ENCODE measurements at regions of chrX and their contacts with region 1.

Region 1: GRCh38 chrX:40580537-40581335 is at the start of gene ATP6AP2:
- DNase-seq: peak; percentile 76 to 95 (median 88)
- ATAC-seq: peak; percentile 95
- H3K4me3 ChIP-seq: peak within 1 kb of the TSS; percentile 82 to 93
- H3K4me3 Mint-ChIP-seq: peak within 1 kb of the TSS; percentile 91
- H3K27ac ChIP-seq: peak within 1 kb of the TSS; percentile 89 to 96
- H3K27ac Mint-ChIP-seq: peak within 1 kb of the TSS; percentile 97
- H3K4me1 ChIP-seq: peaks cover 18% of the 10 kb centered on the region
- H3K4me1 Mint-ChIP-seq: peaks cover 30% of the 10 kb centered on the region
- H3K27me3 ChIP-seq: no peaks in the 10 kb centered on the region
- H3K27me3 Mint-ChIP-seq: no peaks in the 10 kb centered on the region
- CTCF ChIP-seq: no peak
- total RNA-seq, gene ATP6AP2: 62.0 to 67.3 TPM

Region 2: GRCh38 chrX:40591126-40591525 is 10.4 kb after region 1 on chrX:
- CTCF ChIA-PET with region 1: no interaction called
- POLR2A ChIA-PET with region 1: interaction called, 6 read pairs
- intact Hi-C with region 1: loop called in 1 of 2 experiments (anchors 1 kb)
- DNase-seq: no peak
- ATAC-seq: no peak
- H3K4me3 ChIP-seq: no peak overlapping the region
- H3K4me3 Mint-ChIP-seq: no peak overlapping the region
- H3K27ac ChIP-seq: no peak overlapping the region
- H3K27ac Mint-ChIP-seq: no peak overlapping the region
- H3K4me1 ChIP-seq: peaks cover 23% of the 10 kb centered on the region
- H3K4me1 Mint-ChIP-seq: peaks cover 28% of the 10 kb centered on the region
- H3K27me3 ChIP-seq: no peaks in the 10 kb centered on the region
- H3K27me3 Mint-ChIP-seq: no peaks in the 10 kb centered on the region
- CTCF ChIP-seq: no peak

Region 3: DNA sequence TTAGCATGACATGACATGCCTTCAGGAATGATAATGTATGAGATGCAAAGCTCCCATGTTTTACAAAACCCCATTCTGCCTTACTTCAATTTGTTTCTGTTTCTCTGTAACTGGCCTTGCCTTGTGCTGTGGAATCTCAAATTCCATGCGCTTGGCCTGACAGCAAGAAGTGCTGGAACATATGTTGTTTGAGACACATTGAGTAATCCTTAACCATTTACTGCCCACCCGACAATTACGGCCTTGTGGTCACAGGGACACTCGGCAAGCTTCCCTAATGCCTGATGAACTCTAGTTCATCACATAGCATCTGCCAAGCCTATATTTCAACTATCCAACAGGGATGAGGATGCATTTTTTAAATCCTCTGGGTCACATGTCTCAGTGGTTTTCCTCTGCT is 1569.0 kb after region 1 on chrX:
- CTCF ChIA-PET with region 1: no interaction called
- POLR2A ChIA-PET with region 1: no interaction called
- intact Hi-C with region 1: loop called in 1 of 2 experiments (anchors 10 kb)
- DNase-seq: no peak
- ATAC-seq: no peak
- H3K4me3 ChIP-seq: no peak overlapping the region
- H3K4me3 Mint-ChIP-seq: no peak overlapping the region
- H3K27ac ChIP-seq: no peak overlapping the region
- H3K27ac Mint-ChIP-seq: no peak overlapping the region
- H3K4me1 ChIP-seq: no peaks in the 10 kb centered on the region
- H3K4me1 Mint-ChIP-seq: peaks cover 6% of the 10 kb centered on the region
- H3K27me3 ChIP-seq: no peaks in the 10 kb centered on the region
- H3K27me3 Mint-ChIP-seq: no peaks in the 10 kb centered on the region
- CTCF ChIP-seq: no peak